ENCODE measurements at regions of chr1 and their contacts with region 1.

Region 1: GRCh38 chr1:6613361-6614018 is at the start of gene PHF13:
- DNase-seq: peak; percentile 99
- H3K4me3 ChIP-seq: peak within 1 kb of the TSS; percentile 77 to 89 (median 88)
- H3K27ac ChIP-seq: peak within 1 kb of the TSS; percentile 84
- H3K4me1 ChIP-seq: peaks cover 23% of the 10 kb centered on the region
- H3K27me3 ChIP-seq: no peaks in the 10 kb centered on the region
- CTCF ChIP-seq: no peak
- total RNA-seq, gene PHF13: 11.8 to 16.3 TPM

Region 2: GRCh38 chr1:6523566-6523965 is 89.9 kb before region 1 on chr1:
- CTCF ChIA-PET with region 1: no interaction called
- dilution Hi-C with region 1: no loop called
- in situ Hi-C with region 1: no loop called
- intact Hi-C with region 1: no loop called
- DNase-seq: peak; percentile 36
- H3K4me3 ChIP-seq: no peak overlapping the region
- H3K27ac ChIP-seq: no peak overlapping the region
- H3K4me1 ChIP-seq: peaks cover 30% of the 10 kb centered on the region
- H3K27me3 ChIP-seq: no peaks in the 10 kb centered on the region
- CTCF ChIP-seq: peak; percentile 59 to 72

Region 3: DNA sequence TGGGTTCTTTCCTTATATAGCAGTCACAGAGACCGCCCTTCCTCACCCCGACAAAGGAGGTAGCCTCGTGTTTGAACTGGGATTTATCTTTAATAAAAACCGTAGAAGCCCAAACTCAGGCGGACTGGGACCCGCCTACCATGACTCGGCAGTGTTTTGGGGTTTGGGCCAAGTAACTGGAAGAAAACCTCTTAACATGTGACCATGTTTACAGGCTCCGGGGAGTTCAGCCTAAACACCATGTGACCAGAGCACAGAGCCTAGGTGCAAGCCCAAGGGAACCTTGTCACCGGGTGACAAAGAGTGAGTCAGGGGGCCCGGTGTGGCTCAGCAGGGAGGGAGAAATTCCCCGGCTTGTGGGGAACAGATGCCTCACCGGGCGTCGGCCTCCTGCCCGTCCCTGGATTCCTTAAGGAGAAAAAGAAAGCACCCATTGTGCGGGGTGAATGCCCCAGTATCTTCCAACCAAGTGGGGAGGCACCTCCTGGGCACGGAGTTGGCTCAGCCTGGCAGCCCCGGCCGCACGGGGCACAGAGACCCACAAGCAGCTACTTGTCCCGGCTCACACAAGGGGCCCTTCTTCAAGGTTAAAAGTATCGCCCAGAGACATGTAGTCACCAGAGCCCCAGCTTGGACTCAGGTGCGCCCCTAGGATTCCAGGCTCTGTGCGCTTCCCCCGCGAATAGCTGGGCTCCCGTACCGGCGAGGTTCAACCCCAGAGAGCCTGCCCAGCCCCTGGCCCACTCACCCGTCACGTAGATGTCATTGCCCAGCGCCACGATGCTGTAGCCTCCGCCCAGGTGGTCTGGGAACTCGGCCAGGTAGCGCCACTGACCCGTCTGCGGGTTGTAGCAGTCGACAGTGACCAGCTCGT is 12.2 kb before region 1 on chr1:
- CTCF ChIA-PET with region 1: no interaction called
- dilution Hi-C with region 1: no loop called
- in situ Hi-C with region 1: no loop called
- intact Hi-C with region 1: loop called (anchors 1 kb)
- DNase-seq: peak; percentile 99
- H3K4me3 ChIP-seq: peak overlapping the region; percentile 58 to 98 (median 95)
- H3K27ac ChIP-seq: peak overlapping the region; percentile 97
- H3K4me1 ChIP-seq: peaks cover 42% of the 10 kb centered on the region
- H3K27me3 ChIP-seq: no peaks in the 10 kb centered on the region
- CTCF ChIP-seq: peak in 1 of 2 donors; percentile 6

Region 4: GRCh38 chr1:6701437-6702153 is 88.1 kb after region 1 on chr1 and contains the start of gene DNAJC11:
- CTCF ChIA-PET with region 1: no interaction called
- dilution Hi-C with region 1: no loop called
- in situ Hi-C with region 1: no loop called
- intact Hi-C with region 1: no loop called
- DNase-seq: peak; percentile 78
- H3K4me3 ChIP-seq: peak within 1 kb of the TSS; percentile 68 to 98 (median 92)
- H3K27ac ChIP-seq: peak within 1 kb of the TSS; percentile 84
- H3K4me1 ChIP-seq: peaks cover 16% of the 10 kb centered on the region
- H3K27me3 ChIP-seq: no peaks in the 10 kb centered on the region
- CTCF ChIP-seq: peak; percentile 64 to 90
- total RNA-seq, gene DNAJC11: 27.3 to 69.3 TPM